Heart left ventricle (tissue), 16 donors: ENCODE measurements at regions of chr7 and their contacts with region 1.

Region 1: DNA sequence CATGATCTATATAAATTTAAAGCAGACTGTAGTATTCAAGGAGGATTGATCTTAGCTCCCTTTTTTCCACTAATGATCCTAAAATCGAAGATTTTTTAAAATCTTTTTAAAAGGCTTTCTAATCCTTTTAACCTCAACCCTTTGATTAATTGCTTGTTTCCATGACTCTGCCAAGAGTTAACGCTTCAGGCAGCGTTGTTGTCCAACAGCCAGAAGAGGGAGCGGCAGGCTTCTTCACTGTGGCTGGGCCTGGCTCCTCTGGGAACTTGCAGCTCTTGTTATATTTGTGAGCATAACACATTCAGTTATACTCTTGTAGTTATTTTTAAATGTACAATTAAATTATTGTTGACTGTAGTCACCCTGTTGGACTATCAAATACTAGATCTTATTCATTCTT is 26.3 kb downstream of the CRCP start:
- DNase-seq: peak; percentile 55 to 78 (median 68)
- ATAC-seq: peak in 3 of 4 donors; percentile 65 to 79 (median 75)
- H3K4me3 ChIP-seq: no peak overlapping the region
- H3K27ac ChIP-seq: peak overlapping the region in 3 of 12 donors; percentile 7 to 52 (median 14)
- H3K4me1 ChIP-seq: peaks cover 0 to 41% (median 19%) of the 10 kb centered on the region in 12 donors
- H3K27me3 ChIP-seq: no peaks in the 10 kb centered on the region
- CTCF ChIP-seq: peak; percentile 48 to 80 (median 66)
- POLR2A ChIP-seq: no peak

Region 2: GRCh38 chr7:66204822-66205740 is 64.2 kb after region 1 on chr7 and contains the start of gene TPST1:
- intact Hi-C with region 1: loop called in 3 of 10 experiments (anchors 5 to 10 kb)
- DNase-seq: peak; percentile 88 to 93 (median 89)
- ATAC-seq: peak; percentile 92 to 97 (median 97)
- H3K4me3 ChIP-seq: peak within 1 kb of the TSS; percentile 67 to 99 (median 96)
- H3K27ac ChIP-seq: peak within 1 kb of the TSS in 11 of 12 donors; percentile 40 to 84 (median 70)
- H3K4me1 ChIP-seq: peaks cover 0 to 29% (median 12%) of the 10 kb centered on the region in 12 donors
- H3K27me3 ChIP-seq: no peaks in the 10 kb centered on the region
- CTCF ChIP-seq: peak; percentile 29 to 82 (median 50)
- POLR2A ChIP-seq: peak in 1 of 2 donors; percentile 91
- total RNA-seq, gene TPST1: 3.6 to 10.8 (median 5.5) TPM

Region 3: GRCh38 chr7:66330961-66331360 is 190.0 kb after region 1 on chr7:
- intact Hi-C with region 1: loop called in 1 of 10 experiments (anchors 5 kb)
- DNase-seq: peak; percentile 59 to 86 (median 70)
- ATAC-seq: peak; percentile 75 to 96 (median 86)
- H3K4me3 ChIP-seq: no peak overlapping the region
- H3K27ac ChIP-seq: peak overlapping the region in 2 of 12 donors; percentile 5 to 56
- H3K4me1 ChIP-seq: peaks cover 0 to 21% (median 7%) of the 10 kb centered on the region in 12 donors
- H3K27me3 ChIP-seq: no peaks in the 10 kb centered on the region
- CTCF ChIP-seq: no peak
- POLR2A ChIP-seq: no peak

Region 4: GRCh38 chr7:66352071-66352470 is 211.1 kb after region 1 on chr7:
- intact Hi-C with region 1: loop called in 1 of 10 experiments (anchors 10 kb)
- DNase-seq: no peak
- ATAC-seq: peak in 2 of 4 donors; percentile 10 to 34
- H3K4me3 ChIP-seq: peak overlapping the region in 1 of 12 donors; percentile 1
- H3K27ac ChIP-seq: peak overlapping the region in 4 of 12 donors; percentile 1 to 26 (median 13)
- H3K4me1 ChIP-seq: peaks cover 0 to 23% (median 3%) of the 10 kb centered on the region in 12 donors
- H3K27me3 ChIP-seq: no peaks in the 10 kb centered on the region
- CTCF ChIP-seq: peak in 2 of 12 donors; percentile 7 to 31
- POLR2A ChIP-seq: no peak

Region 5: GRCh38 chr7:66413379-66414114 is 272.6 kb after region 1 on chr7:
- intact Hi-C with region 1: loop called in 1 of 10 experiments (anchors 10 kb)
- DNase-seq: peak; percentile 80 to 91 (median 88)
- ATAC-seq: peak; percentile 73 to 93 (median 91)
- H3K4me3 ChIP-seq: peak overlapping the region; percentile 38 to 70 (median 56)
- H3K27ac ChIP-seq: peak overlapping the region in 2 of 12 donors; percentile 32 to 37
- H3K4me1 ChIP-seq: peaks cover 0 to 13% (median 9%) of the 10 kb centered on the region in 12 donors
- H3K27me3 ChIP-seq: no peaks in the 10 kb centered on the region
- CTCF ChIP-seq: peak in 10 of 12 donors; percentile 10 to 56 (median 38)
- POLR2A ChIP-seq: no peak

Region 6: GRCh38 chr7:66493235-66494181 is 352.6 kb after region 1 on chr7:
- intact Hi-C with region 1: loop called in 3 of 10 experiments (anchors 5 to 10 kb)
- DNase-seq: peak; percentile 98 to 99 (median 98)
- ATAC-seq: peak; percentile 98 to 99 (median 98)
- H3K4me3 ChIP-seq: peak overlapping the region; percentile 33 to 93 (median 68)
- H3K27ac ChIP-seq: peak overlapping the region; percentile 81 to 97 (median 92)
- H3K4me1 ChIP-seq: peaks cover 0 to 21% (median 10%) of the 10 kb centered on the region in 12 donors
- H3K27me3 ChIP-seq: no peaks in the 10 kb centered on the region
- CTCF ChIP-seq: peak in 7 of 12 donors; percentile 13 to 40 (median 23)
- POLR2A ChIP-seq: peak; percentile 65 to 97